ENCODE measurements at regions of chr6 and their contacts with region 1.

Region 1: GRCh38 chr6:119110601-119111548 is 32.4 kb upstream of the FAM184A start:
- DNase-seq: peak; percentile 59
- H3K27ac ChIP-seq: no peak overlapping the region
- CTCF ChIP-seq: peak; percentile 66

Region 2: DNA sequence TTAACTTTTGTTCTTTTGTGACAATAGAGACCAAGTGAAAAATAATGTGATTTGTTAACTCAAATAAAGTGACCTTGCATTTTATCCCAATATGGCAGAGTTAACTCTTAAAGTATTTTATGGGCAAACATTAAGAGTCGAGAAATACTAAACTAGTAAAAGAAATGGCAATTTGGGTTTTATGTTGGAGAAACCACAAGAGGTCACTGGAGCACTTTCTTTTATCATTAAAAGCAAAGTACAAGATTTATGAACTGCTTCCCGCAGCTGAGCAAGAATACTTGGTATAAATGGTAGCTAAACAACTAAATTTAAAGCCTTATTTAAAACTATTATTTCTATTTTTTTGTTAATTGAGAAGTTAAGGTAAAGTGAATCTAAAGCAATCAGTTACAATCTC is 142.5 kb before region 1 on chr6:
- CTCF ChIA-PET with region 1: interaction called, 14 read pairs
- POLR2A ChIA-PET with region 1: no interaction called
- DNase-seq: no peak
- H3K27ac ChIP-seq: no peak overlapping the region
- CTCF ChIP-seq: peak; percentile 50

Region 3: GRCh38 chr6:118993803-118994251 is 117.0 kb before region 1 on chr6:
- CTCF ChIA-PET with region 1: interaction called, 10 read pairs
- POLR2A ChIA-PET with region 1: no interaction called
- DNase-seq: no peak
- H3K27ac ChIP-seq: no peak overlapping the region
- CTCF ChIP-seq: no peak

Region 4: DNA sequence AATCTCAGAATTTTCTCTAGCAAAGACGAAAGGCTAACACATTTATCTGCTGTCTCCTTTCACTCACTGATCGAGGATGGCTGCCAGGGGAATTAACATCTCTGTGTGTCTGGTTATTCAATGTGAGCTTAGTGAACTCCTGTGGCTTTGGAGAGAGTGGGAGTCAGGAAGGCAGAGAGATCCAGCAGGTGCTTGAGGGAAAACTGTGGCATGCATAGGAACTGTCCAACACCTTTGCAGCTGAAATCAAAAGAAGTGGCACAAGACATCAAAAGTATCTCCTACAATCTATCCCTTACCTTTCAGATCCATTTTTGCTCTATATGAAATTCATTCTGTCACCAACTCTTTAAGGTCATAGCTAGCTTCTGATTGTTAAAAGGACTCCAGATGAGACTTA is 20.6 kb before region 1 on chr6:
- CTCF ChIA-PET with region 1: no interaction called
- POLR2A ChIA-PET with region 1: no interaction called
- DNase-seq: no peak
- H3K27ac ChIP-seq: no peak overlapping the region
- CTCF ChIP-seq: no peak

Measured in RWPE1 (cell line).